ENCODE measurements at regions of chr10 and their contacts with region 1.

Region 1: GRCh38 chr10:43138021-43138756 is at the start of gene CSGALNACT2:
- DNase-seq: peak; percentile 78 to 95 (median 88)
- ATAC-seq: peak; percentile 65
- H3K4me3 ChIP-seq: peak within 1 kb of the TSS; percentile 70 to 87
- H3K4me3 Mint-ChIP-seq: peak within 1 kb of the TSS; percentile 98
- H3K27ac ChIP-seq: peak within 1 kb of the TSS; percentile 89 to 91
- H3K27ac Mint-ChIP-seq: peak within 1 kb of the TSS; percentile 99
- H3K4me1 ChIP-seq: peaks cover 36% of the 10 kb centered on the region
- H3K4me1 Mint-ChIP-seq: peaks cover 49% of the 10 kb centered on the region
- H3K27me3 ChIP-seq: no peaks in the 10 kb centered on the region
- H3K27me3 Mint-ChIP-seq: no peaks in the 10 kb centered on the region
- CTCF ChIP-seq: no peak
- total RNA-seq, gene CSGALNACT2: 66.7 to 66.9 TPM

Region 2: GRCh38 chr10:42475168-42476098 is 662.8 kb before region 1 on chr10:
- CTCF ChIA-PET with region 1: no interaction called
- POLR2A ChIA-PET with region 1: no interaction called
- intact Hi-C with region 1: no loop called
- DNase-seq: no peak
- ATAC-seq: no peak
- H3K4me3 ChIP-seq: no peak overlapping the region
- H3K4me3 Mint-ChIP-seq: no peak overlapping the region
- H3K27ac ChIP-seq: no peak overlapping the region
- H3K27ac Mint-ChIP-seq: no peak overlapping the region
- H3K4me1 ChIP-seq: no peaks in the 10 kb centered on the region
- H3K4me1 Mint-ChIP-seq: peaks cover 4% of the 10 kb centered on the region
- H3K27me3 ChIP-seq: peaks cover 0 to 6% of the 10 kb centered on the region in 2 experiments
- H3K27me3 Mint-ChIP-seq: peaks cover 34% of the 10 kb centered on the region
- CTCF ChIP-seq: no peak

Region 3: DNA sequence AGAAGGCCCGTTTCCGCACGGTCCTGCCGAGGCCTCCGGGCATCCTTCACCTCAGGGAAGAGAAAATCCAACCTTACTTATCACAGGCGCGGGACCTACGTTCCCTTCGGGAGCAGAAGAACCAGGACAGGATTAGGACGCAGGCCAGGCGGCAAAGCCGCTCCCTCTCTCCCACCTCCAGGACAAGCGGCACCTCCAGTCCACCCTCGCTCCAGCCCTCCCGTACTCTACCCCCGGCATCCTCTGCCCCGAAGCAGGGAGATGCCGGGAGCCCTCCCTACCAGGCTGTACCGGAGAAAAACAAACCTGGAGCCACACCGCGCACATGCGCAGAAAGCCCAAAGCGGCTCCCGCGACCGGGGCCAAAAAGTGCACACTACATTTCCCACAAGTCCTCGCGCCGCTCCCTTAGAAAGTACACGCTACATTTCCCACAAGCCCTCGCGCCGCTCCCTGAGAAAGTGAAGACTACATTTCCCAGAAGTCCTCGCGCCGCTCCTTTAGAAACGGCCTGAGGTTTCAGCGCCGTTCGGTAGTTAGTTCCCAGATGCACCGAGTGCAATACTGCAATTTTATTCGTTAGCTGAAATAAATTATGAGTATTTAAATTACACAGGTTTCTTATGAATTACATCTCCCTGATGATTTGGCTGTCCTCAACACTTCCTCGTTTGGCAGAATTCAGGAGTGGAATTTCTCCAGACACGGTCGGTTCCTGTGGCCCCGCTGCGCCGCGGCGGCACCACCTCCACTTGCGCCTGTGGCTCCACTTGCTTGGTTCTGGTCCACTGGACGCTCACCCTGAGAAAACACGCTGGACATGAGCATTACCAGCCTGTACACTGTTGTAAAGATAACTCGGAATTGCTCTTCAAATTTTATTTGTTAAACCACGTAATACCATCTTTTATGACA is 585.4 kb before region 1 on chr10:
- CTCF ChIA-PET with region 1: no interaction called
- POLR2A ChIA-PET with region 1: no interaction called
- intact Hi-C with region 1: loop called (anchors 1 to 2 kb)
- DNase-seq: peak; percentile 86 to 97 (median 95)
- ATAC-seq: peak; percentile 94
- H3K4me3 ChIP-seq: peak overlapping the region; percentile 88 to 94
- H3K4me3 Mint-ChIP-seq: peak overlapping the region; percentile 98
- H3K27ac ChIP-seq: peak overlapping the region; percentile 75 to 85
- H3K27ac Mint-ChIP-seq: peak overlapping the region; percentile 97
- H3K4me1 ChIP-seq: peaks cover 23% of the 10 kb centered on the region
- H3K4me1 Mint-ChIP-seq: peaks cover 49% of the 10 kb centered on the region
- H3K27me3 ChIP-seq: no peaks in the 10 kb centered on the region
- H3K27me3 Mint-ChIP-seq: no peaks in the 10 kb centered on the region
- CTCF ChIP-seq: no peak

Region 4: GRCh38 chr10:42933448-42934340 is 204.5 kb before region 1 on chr10:
- CTCF ChIA-PET with region 1: no interaction called
- POLR2A ChIA-PET with region 1: interaction called, 4 read pairs
- intact Hi-C with region 1: loop called in 1 of 2 experiments (anchors 2 kb)
- DNase-seq: peak in 6 of 9 experiments; percentile 33 to 79 (median 64)
- ATAC-seq: peak; percentile 64
- H3K4me3 ChIP-seq: peak overlapping the region; percentile 51 to 78
- H3K4me3 Mint-ChIP-seq: peak overlapping the region; percentile 85
- H3K27ac ChIP-seq: peak overlapping the region; percentile 19 to 73
- H3K27ac Mint-ChIP-seq: peak overlapping the region; percentile 80
- H3K4me1 ChIP-seq: peaks cover 17% of the 10 kb centered on the region
- H3K4me1 Mint-ChIP-seq: peaks cover 12% of the 10 kb centered on the region
- H3K27me3 ChIP-seq: no peaks in the 10 kb centered on the region
- H3K27me3 Mint-ChIP-seq: peaks cover 13% of the 10 kb centered on the region
- CTCF ChIP-seq: no peak

Region 5: GRCh38 chr10:43166880-43167497 is 28.8 kb after region 1 on chr10:
- CTCF ChIA-PET with region 1: interaction called, 5 read pairs
- POLR2A ChIA-PET with region 1: interaction called, 4 read pairs
- intact Hi-C with region 1: loop called (anchors 2 kb)
- DNase-seq: no peak
- ATAC-seq: no peak
- H3K4me3 ChIP-seq: no peak overlapping the region
- H3K4me3 Mint-ChIP-seq: no peak overlapping the region
- H3K27ac ChIP-seq: no peak overlapping the region
- H3K27ac Mint-ChIP-seq: no peak overlapping the region
- H3K4me1 ChIP-seq: no peaks in the 10 kb centered on the region
- H3K4me1 Mint-ChIP-seq: peaks cover 25% of the 10 kb centered on the region
- H3K27me3 ChIP-seq: no peaks in the 10 kb centered on the region
- H3K27me3 Mint-ChIP-seq: no peaks in the 10 kb centered on the region
- CTCF ChIP-seq: no peak

Region 6: DNA sequence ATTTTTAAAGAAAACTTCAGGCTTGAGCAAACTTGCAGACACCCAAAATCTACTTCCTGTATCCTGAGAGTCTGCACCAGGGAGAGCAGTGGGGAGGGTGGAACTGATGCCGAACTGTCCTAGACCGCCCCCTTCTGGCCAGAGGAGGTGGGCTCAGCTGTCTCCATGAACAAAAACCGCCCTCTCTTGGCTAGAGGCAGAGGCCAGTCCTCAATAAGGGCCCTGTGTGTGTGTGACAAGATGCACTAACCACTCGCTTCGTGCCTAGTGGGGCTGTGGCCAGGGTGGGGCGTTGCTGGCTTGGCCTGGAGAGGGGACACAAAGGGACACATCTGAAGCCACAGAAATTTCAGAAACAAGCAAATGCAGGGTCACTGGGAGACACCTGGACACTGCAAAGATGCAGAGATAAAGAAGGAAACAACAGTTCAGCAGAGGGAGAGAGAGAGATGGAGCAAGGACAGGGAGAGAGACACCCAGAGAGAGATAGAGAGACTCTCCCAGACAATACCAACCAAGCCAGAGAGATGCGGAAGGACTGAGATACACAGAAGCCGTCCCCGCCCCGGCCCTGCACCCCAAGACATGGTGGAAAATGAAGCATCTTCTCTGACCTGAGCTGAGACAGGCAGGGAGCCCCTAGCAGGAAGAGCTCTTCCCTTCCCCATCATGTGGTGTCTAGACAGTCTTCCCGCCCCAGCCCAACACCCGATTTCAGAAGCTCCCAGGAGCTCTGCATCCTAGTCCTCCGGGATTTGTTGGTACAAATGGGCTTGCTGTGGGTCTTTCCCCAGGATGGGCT is 210.5 kb after region 1 on chr10:
- CTCF ChIA-PET with region 1: no interaction called
- POLR2A ChIA-PET with region 1: interaction called, 3 read pairs
- intact Hi-C with region 1: loop called in 1 of 2 experiments (anchors 2 kb)
- DNase-seq: peak; percentile 73 to 93 (median 87)
- ATAC-seq: peak; percentile 100
- H3K4me3 ChIP-seq: no peak overlapping the region
- H3K4me3 Mint-ChIP-seq: no peak overlapping the region
- H3K27ac ChIP-seq: no peak overlapping the region
- H3K27ac Mint-ChIP-seq: no peak overlapping the region
- H3K4me1 ChIP-seq: peaks cover 13% of the 10 kb centered on the region
- H3K4me1 Mint-ChIP-seq: peaks cover 12% of the 10 kb centered on the region
- H3K27me3 ChIP-seq: no peaks in the 10 kb centered on the region
- H3K27me3 Mint-ChIP-seq: peaks cover 15% of the 10 kb centered on the region
- CTCF ChIP-seq: peak; percentile 91

Region 7: DNA sequence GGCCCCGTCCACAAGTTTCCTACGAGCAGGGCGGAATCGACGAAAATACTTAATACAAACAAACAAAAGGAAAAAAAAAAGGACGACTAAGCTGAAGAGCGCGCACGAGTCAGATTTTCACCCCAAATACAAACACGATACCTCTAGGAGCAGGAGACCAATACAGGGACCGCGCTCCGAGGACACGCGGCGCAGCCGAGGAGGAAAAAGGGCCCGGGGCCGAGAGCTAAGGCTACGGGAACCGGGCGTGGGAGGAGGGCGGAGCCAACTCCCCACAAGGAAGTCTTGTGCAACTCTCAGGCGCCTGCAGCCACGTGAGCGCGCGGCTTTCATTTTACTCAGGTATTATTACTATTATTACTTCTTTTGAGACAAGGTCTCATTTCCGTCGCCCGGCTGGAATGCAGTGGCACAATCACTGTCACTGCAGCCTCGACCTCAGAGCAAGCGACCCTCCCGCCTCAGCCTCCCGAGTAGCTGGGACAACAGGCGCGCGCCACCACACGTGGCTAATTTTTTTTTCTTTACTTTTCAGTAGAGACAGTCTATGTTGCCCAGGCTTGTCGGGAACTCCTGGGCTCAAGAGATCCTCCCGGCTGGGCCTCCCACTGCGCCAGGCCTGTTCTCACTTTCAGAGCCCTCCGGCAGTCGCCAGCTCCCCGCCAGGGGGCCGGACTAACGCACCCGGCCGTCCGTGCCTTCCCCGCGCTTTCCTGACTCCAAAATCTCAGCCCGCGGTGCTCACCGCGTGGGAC is 269.6 kb after region 1 on chr10:
- CTCF ChIA-PET with region 1: no interaction called
- POLR2A ChIA-PET with region 1: no interaction called
- intact Hi-C with region 1: loop called in 1 of 2 experiments (anchors 2 kb)
- DNase-seq: peak; percentile 64 to 95 (median 83)
- ATAC-seq: peak; percentile 24
- H3K4me3 ChIP-seq: peak overlapping the region; percentile 72 to 98
- H3K4me3 Mint-ChIP-seq: peak overlapping the region; percentile 94
- H3K27ac ChIP-seq: peak overlapping the region; percentile 98 to 99
- H3K27ac Mint-ChIP-seq: peak overlapping the region; percentile 97
- H3K4me1 ChIP-seq: peaks cover 39% of the 10 kb centered on the region
- H3K4me1 Mint-ChIP-seq: peaks cover 33% of the 10 kb centered on the region
- H3K27me3 ChIP-seq: no peaks in the 10 kb centered on the region
- H3K27me3 Mint-ChIP-seq: no peaks in the 10 kb centered on the region
- CTCF ChIP-seq: peak; percentile 33

Region 8: DNA sequence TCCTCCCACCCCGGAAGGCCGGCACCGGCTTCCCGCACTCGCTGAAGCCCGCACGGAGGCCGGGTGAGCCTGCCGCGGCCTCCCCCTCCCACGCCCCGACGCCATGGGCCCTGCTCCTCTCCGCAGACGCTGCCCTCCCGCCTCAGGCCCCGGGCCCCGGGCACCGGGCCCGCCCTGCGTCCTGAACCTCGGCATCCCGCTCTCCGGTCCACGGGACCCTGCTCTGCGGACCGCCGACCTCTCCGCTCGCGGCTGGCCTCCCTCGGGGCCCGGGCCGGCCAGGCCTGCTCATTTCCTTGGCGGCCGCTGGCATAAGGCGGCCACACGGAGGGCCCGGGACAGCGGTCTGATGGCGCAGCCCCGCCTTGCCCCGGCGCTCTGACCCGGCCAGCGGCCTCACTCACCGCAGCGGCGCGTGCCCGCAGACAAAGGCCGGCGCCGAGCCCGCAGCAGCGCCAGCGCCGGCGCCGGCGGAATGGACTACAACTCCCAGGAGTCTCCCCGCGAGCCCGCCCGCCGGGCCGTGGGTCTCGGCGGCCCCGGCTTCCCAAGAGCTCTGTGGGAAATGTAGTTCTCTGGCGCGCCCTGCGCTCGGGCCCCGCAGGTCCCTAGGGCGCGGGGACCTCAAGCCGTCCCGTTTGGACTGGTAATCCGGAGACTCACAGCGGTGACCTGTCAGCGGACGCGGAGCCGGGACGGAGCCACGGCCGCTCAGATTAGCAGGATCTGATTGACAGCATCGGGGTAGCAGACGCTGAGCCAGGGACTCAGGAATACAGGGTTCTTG is 510.4 kb after region 1 on chr10 and contains the start of gene ZNF32:
- CTCF ChIA-PET with region 1: no interaction called
- POLR2A ChIA-PET with region 1: no interaction called
- intact Hi-C with region 1: loop called (anchors 2 to 5 kb)
- DNase-seq: peak; percentile 60 to 89 (median 79)
- ATAC-seq: peak; percentile 97
- H3K4me3 ChIP-seq: peak within 1 kb of the TSS; percentile 74 to 92
- H3K4me3 Mint-ChIP-seq: peak within 1 kb of the TSS; percentile 97
- H3K27ac ChIP-seq: peak within 1 kb of the TSS; percentile 48 to 80
- H3K27ac Mint-ChIP-seq: peak within 1 kb of the TSS; percentile 92
- H3K4me1 ChIP-seq: peaks cover 14% of the 10 kb centered on the region
- H3K4me1 Mint-ChIP-seq: peaks cover 23% of the 10 kb centered on the region
- H3K27me3 ChIP-seq: no peaks in the 10 kb centered on the region
- H3K27me3 Mint-ChIP-seq: peaks cover 1% of the 10 kb centered on the region
- CTCF ChIP-seq: no peak
- total RNA-seq, gene ZNF32: 17.4 to 18.9 TPM